ENCODE measurements at regions of chr14 and their contacts with region 1.

Region 1: DNA sequence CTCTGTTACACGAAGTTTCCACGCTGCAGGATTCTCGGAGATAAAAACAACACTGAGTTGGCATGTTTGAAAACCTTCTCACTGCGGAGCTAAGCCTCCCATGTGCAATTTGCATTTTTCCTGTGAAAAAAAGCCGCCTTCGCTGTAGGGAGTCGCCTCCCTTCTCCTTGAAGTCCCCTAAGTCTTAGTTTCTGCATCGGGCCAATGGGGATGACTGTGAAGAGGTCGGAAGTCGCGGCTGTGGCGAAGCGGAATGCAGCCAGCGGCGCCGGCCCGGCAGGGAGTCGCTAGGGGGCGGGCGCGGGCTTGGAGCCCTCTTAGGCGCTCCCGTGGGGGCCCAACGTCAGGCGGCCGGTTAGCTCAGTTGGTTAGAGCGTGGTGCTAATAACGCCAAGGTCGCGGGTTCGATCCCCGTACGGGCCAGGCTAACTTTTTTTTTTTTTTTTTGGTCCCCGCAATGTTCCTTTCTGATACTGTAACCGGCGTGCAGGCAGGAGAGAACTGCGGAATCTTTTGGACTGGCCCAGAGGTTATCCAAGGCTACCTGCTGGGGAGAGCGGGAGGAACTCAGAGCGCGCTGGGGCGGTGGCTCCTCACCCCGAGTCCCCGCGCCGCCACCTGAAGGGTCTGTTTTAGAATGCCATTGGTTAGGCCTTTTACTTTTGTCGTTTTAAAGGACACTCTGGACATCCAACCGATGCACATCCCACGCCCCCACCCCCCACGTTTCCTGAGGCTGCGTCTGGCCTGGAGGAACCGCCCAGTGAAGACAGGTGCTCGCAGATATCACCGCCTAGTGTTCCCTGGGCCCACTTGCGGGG is 2.6 kb upstream of the ZNF839 start:
- DNase-seq: peak; percentile 85 to 99 (median 96)
- ATAC-seq: peak; percentile 55
- H3K4me3 ChIP-seq: peak overlapping the region; percentile 72
- H3K4me3 Mint-ChIP-seq: peak overlapping the region; percentile 100
- H3K27ac ChIP-seq: peak overlapping the region; percentile 43 to 70
- H3K27ac Mint-ChIP-seq: peak overlapping the region; percentile 100
- H3K4me1 ChIP-seq: peaks cover 66% of the 10 kb centered on the region
- H3K4me1 Mint-ChIP-seq: peaks cover 62% of the 10 kb centered on the region
- H3K27me3 ChIP-seq: no peaks in the 10 kb centered on the region
- H3K27me3 Mint-ChIP-seq: peaks cover 11% of the 10 kb centered on the region
- CTCF ChIP-seq: peak; percentile 79

Region 2: GRCh38 chr14:101761032-101761880 is 555.7 kb before region 1 on chr14 and contains the start of gene PPP2R5C:
- CTCF ChIA-PET with region 1: no interaction called
- POLR2A ChIA-PET with region 1: no interaction called
- intact Hi-C with region 1: loop called in 1 of 2 experiments (anchors 5 kb)
- DNase-seq: peak; percentile 78 to 94 (median 86)
- ATAC-seq: peak; percentile 60
- H3K4me3 ChIP-seq: peak within 1 kb of the TSS; percentile 97
- H3K4me3 Mint-ChIP-seq: peak within 1 kb of the TSS; percentile 97
- H3K27ac ChIP-seq: peak within 1 kb of the TSS; percentile 79
- H3K27ac Mint-ChIP-seq: peak within 1 kb of the TSS; percentile 91
- H3K4me1 ChIP-seq: peaks cover 30% of the 10 kb centered on the region
- H3K4me1 Mint-ChIP-seq: peaks cover 43% of the 10 kb centered on the region
- H3K27me3 ChIP-seq: no peaks in the 10 kb centered on the region
- H3K27me3 Mint-ChIP-seq: no peaks in the 10 kb centered on the region
- CTCF ChIP-seq: no peak
- total RNA-seq, gene PPP2R5C: 463 to 487 TPM

Region 3: GRCh38 chr14:102020058-102020971 is 296.6 kb before region 1 on chr14:
- CTCF ChIA-PET with region 1: no interaction called
- POLR2A ChIA-PET with region 1: no interaction called
- intact Hi-C with region 1: no loop called
- DNase-seq: peak in 12 of 14 experiments; percentile 6 to 57 (median 30)
- ATAC-seq: peak; percentile 85
- H3K4me3 ChIP-seq: no peak overlapping the region
- H3K4me3 Mint-ChIP-seq: no peak overlapping the region
- H3K27ac ChIP-seq: peak overlapping the region in 1 of 2 donors; percentile 0
- H3K27ac Mint-ChIP-seq: peak overlapping the region; percentile 81
- H3K4me1 ChIP-seq: peaks cover 11% of the 10 kb centered on the region
- H3K4me1 Mint-ChIP-seq: peaks cover 16% of the 10 kb centered on the region
- H3K27me3 ChIP-seq: no peaks in the 10 kb centered on the region
- H3K27me3 Mint-ChIP-seq: no peaks in the 10 kb centered on the region
- CTCF ChIP-seq: no peak

Region 4: GRCh38 chr14:102063091-102063802 is 253.7 kb before region 1 on chr14:
- CTCF ChIA-PET with region 1: no interaction called
- POLR2A ChIA-PET with region 1: no interaction called
- intact Hi-C with region 1: loop called in 1 of 2 experiments (anchors 1 kb)
- DNase-seq: peak; percentile 51 to 86 (median 62)
- ATAC-seq: peak; percentile 95
- H3K4me3 ChIP-seq: no peak overlapping the region
- H3K4me3 Mint-ChIP-seq: no peak overlapping the region
- H3K27ac ChIP-seq: no peak overlapping the region
- H3K27ac Mint-ChIP-seq: no peak overlapping the region
- H3K4me1 ChIP-seq: peaks cover 6% of the 10 kb centered on the region
- H3K4me1 Mint-ChIP-seq: peaks cover 4% of the 10 kb centered on the region
- H3K27me3 ChIP-seq: no peaks in the 10 kb centered on the region
- H3K27me3 Mint-ChIP-seq: no peaks in the 10 kb centered on the region
- CTCF ChIP-seq: peak; percentile 32

Region 5: GRCh38 chr14:102078831-102079699 is 237.9 kb before region 1 on chr14:
- CTCF ChIA-PET with region 1: no interaction called
- POLR2A ChIA-PET with region 1: no interaction called
- intact Hi-C with region 1: no loop called
- DNase-seq: no peak
- ATAC-seq: no peak
- H3K4me3 ChIP-seq: no peak overlapping the region
- H3K4me3 Mint-ChIP-seq: no peak overlapping the region
- H3K27ac ChIP-seq: no peak overlapping the region
- H3K27ac Mint-ChIP-seq: no peak overlapping the region
- H3K4me1 ChIP-seq: peaks cover 9% of the 10 kb centered on the region
- H3K4me1 Mint-ChIP-seq: peaks cover 43% of the 10 kb centered on the region
- H3K27me3 ChIP-seq: no peaks in the 10 kb centered on the region
- H3K27me3 Mint-ChIP-seq: no peaks in the 10 kb centered on the region
- CTCF ChIP-seq: no peak

Region 6: GRCh38 chr14:102139248-102140026 is 177.5 kb before region 1 on chr14 and contains the start of gene WDR20:
- CTCF ChIA-PET with region 1: interaction called, 6 read pairs
- POLR2A ChIA-PET with region 1: interaction called, 3 read pairs
- intact Hi-C with region 1: loop called in 1 of 2 experiments (anchors 2 kb)
- DNase-seq: peak; percentile 99 to 100 (median 99)
- ATAC-seq: peak; percentile 94
- H3K4me3 ChIP-seq: peak within 1 kb of the TSS; percentile 96
- H3K4me3 Mint-ChIP-seq: peak within 1 kb of the TSS; percentile 100
- H3K27ac ChIP-seq: peak within 1 kb of the TSS; percentile 77 to 88
- H3K27ac Mint-ChIP-seq: peak within 1 kb of the TSS; percentile 99
- H3K4me1 ChIP-seq: peaks cover 16% of the 10 kb centered on the region
- H3K4me1 Mint-ChIP-seq: peaks cover 30% of the 10 kb centered on the region
- H3K27me3 ChIP-seq: no peaks in the 10 kb centered on the region
- H3K27me3 Mint-ChIP-seq: no peaks in the 10 kb centered on the region
- CTCF ChIP-seq: no peak
- total RNA-seq, gene WDR20: 40.1 to 41.2 TPM

Region 7: DNA sequence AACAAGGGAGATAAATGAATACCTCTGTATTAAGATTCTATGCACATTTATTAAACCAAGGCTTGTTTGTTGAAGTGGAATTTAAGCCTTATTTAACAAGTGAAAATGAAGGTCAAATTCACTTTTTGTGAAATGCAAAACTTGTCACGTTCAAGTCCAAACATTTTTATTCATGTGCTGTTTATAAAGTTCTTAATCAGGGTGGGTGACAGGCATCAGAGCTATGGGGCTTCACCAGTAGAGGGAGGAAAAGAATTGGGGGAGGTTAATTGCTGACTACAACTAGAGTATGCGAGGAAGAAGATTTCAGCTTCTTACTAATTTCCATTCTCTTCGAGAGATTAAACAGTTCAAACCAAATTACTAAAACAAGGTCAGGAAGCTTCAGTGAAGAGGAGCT is 21.7 kb before region 1 on chr14:
- CTCF ChIA-PET with region 1: interaction called, 10 read pairs
- POLR2A ChIA-PET with region 1: no interaction called
- intact Hi-C with region 1: no loop called
- DNase-seq: no peak
- ATAC-seq: no peak
- H3K4me3 ChIP-seq: no peak overlapping the region
- H3K4me3 Mint-ChIP-seq: no peak overlapping the region
- H3K27ac ChIP-seq: no peak overlapping the region
- H3K27ac Mint-ChIP-seq: no peak overlapping the region
- H3K4me1 ChIP-seq: no peaks in the 10 kb centered on the region
- H3K4me1 Mint-ChIP-seq: no peaks in the 10 kb centered on the region
- H3K27me3 ChIP-seq: no peaks in the 10 kb centered on the region
- H3K27me3 Mint-ChIP-seq: no peaks in the 10 kb centered on the region
- CTCF ChIP-seq: no peak

Region 8: GRCh38 chr14:102344485-102344884 is 27.5 kb after region 1 on chr14:
- CTCF ChIA-PET with region 1: no interaction called
- POLR2A ChIA-PET with region 1: no interaction called
- intact Hi-C with region 1: no loop called
- DNase-seq: no peak
- ATAC-seq: no peak
- H3K4me3 ChIP-seq: no peak overlapping the region
- H3K4me3 Mint-ChIP-seq: no peak overlapping the region
- H3K27ac ChIP-seq: no peak overlapping the region
- H3K27ac Mint-ChIP-seq: no peak overlapping the region
- H3K4me1 ChIP-seq: no peaks in the 10 kb centered on the region
- H3K4me1 Mint-ChIP-seq: no peaks in the 10 kb centered on the region
- H3K27me3 ChIP-seq: no peaks in the 10 kb centered on the region
- H3K27me3 Mint-ChIP-seq: no peaks in the 10 kb centered on the region
- CTCF ChIP-seq: no peak

Region 9: DNA sequence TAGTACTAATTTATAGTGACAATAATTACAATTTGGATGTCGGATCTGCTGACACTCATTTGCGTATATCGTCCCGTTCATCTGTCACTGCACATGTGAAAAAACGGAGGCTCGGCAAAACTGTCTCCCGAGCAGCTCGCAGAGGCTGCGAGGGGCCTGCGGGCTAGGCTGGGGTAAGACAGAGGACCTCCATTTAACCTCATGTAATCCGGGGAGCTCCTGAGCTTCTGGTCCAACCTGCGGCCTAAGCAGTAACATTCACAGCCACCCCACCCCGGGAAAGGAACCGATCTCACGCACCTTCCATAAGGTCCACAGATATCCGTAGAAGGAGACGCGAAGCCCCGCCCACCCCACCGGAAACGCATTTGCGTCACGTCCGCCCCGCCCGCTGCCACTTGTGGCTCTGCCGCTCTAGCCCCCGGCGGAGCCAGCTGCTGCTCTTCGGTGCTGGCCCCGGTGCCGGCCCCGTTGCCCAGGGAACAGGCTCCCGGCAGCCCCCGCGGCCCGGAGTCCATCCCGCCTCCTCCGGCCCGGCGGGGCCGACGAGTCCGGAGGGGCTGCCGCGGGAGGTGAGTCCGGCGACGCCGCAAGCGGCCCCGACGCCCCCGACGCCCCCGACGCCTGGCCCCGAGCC is 45.7 kb after region 1 on chr14 and contains the starts of genes CINP and TECPR2:
- CTCF ChIA-PET with region 1: no interaction called
- POLR2A ChIA-PET with region 1: interaction called, 17 read pairs
- intact Hi-C with region 1: loop called (anchors 1 to 2 kb)
- DNase-seq: peak; percentile 92 to 99 (median 96)
- ATAC-seq: peak; percentile 90
- H3K4me3 ChIP-seq: peak within 1 kb of the TSS; percentile 91
- H3K4me3 Mint-ChIP-seq: peak within 1 kb of the TSS; percentile 94
- H3K27ac ChIP-seq: peak within 1 kb of the TSS; percentile 74 to 89
- H3K27ac Mint-ChIP-seq: no peak within 1 kb of the TSS
- H3K4me1 ChIP-seq: peaks cover 27% of the 10 kb centered on the region
- H3K4me1 Mint-ChIP-seq: peaks cover 21% of the 10 kb centered on the region
- H3K27me3 ChIP-seq: no peaks in the 10 kb centered on the region
- H3K27me3 Mint-ChIP-seq: no peaks in the 10 kb centered on the region
- CTCF ChIP-seq: no peak
- total RNA-seq, gene CINP: 12.6 to 14.5 TPM
- total RNA-seq, gene TECPR2: 5.0 to 5.4 TPM

Region 10: GRCh38 chr14:102516531-102517415 is 199.8 kb after region 1 on chr14:
- CTCF ChIA-PET with region 1: interaction called, 3 read pairs
- POLR2A ChIA-PET with region 1: no interaction called
- intact Hi-C with region 1: loop called (anchors 2 to 10 kb)
- DNase-seq: peak in 13 of 14 experiments; percentile 35 to 81 (median 54)
- ATAC-seq: peak; percentile 87
- H3K4me3 ChIP-seq: peak overlapping the region; percentile 53
- H3K4me3 Mint-ChIP-seq: peak overlapping the region; percentile 90
- H3K27ac ChIP-seq: no peak overlapping the region
- H3K27ac Mint-ChIP-seq: no peak overlapping the region
- H3K4me1 ChIP-seq: peaks cover 12% of the 10 kb centered on the region
- H3K4me1 Mint-ChIP-seq: peaks cover 4% of the 10 kb centered on the region
- H3K27me3 ChIP-seq: no peaks in the 10 kb centered on the region
- H3K27me3 Mint-ChIP-seq: peaks cover 4% of the 10 kb centered on the region
- CTCF ChIP-seq: peak; percentile 72

Measured in CD4-positive, alpha-beta T cell (primary cell).